BJ (cell line): ENCODE measurements at regions of chr1 and their contacts with region 1.

Region 1: DNA sequence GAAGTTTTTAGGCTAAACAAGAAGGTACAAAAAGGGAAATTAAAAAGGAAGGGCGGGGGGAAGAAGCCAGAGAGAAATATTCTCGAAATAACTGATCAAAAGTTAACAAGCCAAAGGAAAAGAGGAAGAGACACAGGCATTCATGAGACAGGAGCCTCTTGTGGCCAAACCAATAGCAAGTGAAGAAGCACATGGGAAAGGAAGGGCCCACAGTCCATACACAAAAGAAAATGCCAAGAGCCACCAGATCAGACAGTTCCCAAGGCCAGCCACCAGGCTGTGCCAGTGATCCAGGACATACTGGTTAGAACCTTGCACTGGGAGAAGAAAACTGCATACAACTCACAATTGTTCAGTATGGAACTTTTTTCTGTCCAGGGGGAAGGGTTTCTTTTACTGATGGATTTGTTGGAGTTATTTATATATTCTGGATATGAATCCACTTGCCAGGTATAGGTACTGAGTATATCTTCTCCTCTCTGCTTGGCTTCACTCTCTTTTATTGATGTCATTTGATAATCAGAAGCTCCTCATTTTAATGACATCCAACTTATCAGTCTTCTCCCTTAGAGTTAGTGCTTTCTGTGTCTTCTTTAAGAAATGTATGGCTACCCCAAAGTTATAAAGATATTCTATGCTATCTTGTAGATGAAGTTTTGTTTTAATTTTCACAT is 76.8 kb downstream of the CD46 start:
- DNase-seq: peak; percentile 59
- H3K4me3 ChIP-seq: no peak overlapping the region
- H3K27me3 ChIP-seq: no peaks in the 10 kb centered on the region
- CTCF ChIP-seq: peak; percentile 89

Region 2: GRCh38 chr1:207654320-207654719 is 174.3 kb before region 1 on chr1:
- CTCF ChIA-PET with region 1: no interaction called
- POLR2A ChIA-PET with region 1: no interaction called
- DNase-seq: no peak
- H3K4me3 ChIP-seq: no peak overlapping the region
- H3K27me3 ChIP-seq: no peaks in the 10 kb centered on the region; the same call in 1 of the 2 replicates
- CTCF ChIP-seq: 0 out of 2 replicates have a peak, but pooled peaks have one; percentile 18

Region 3: DNA sequence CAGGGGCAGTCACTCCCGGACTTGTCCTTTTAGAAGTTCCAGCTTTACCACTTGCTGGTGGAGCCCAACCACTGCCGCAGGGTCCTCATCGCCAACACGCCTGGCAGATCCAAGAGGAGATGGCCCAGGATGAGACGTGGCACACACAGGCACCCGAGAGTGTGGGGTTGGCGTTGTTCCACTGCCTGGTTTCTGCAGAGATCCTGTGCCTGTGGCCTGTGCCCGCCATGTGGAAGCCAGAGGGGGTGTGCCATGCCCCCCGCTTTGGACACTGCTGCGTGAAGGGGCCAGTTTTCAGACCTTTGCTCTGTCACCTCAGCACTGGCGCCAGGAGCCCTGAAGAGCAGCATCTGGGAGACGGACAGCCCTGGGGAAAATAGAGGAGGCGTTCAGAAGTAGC is 66.0 kb before region 1 on chr1:
- CTCF ChIA-PET with region 1: no interaction called
- POLR2A ChIA-PET with region 1: no interaction called
- DNase-seq: no peak
- H3K4me3 ChIP-seq: no peak overlapping the region
- H3K27me3 ChIP-seq: no peaks in the 10 kb centered on the region
- CTCF ChIP-seq: no peak

Region 4: GRCh38 chr1:207811920-207812720 is 16.5 kb before region 1 on chr1:
- CTCF ChIA-PET with region 1: interaction called, 47 read pairs
- POLR2A ChIA-PET with region 1: no interaction called
- DNase-seq: no peak
- H3K4me3 ChIP-seq: no peak overlapping the region
- H3K27me3 ChIP-seq: no peaks in the 10 kb centered on the region
- CTCF ChIP-seq: peak; percentile 64